CD14-positive monocyte (primary cell): ENCODE measurements at regions of chr17 and their contacts with region 1.

Region 1: GRCh38 chr17:80981062-80981902 is 10.4 kb upstream of the CHMP6 start:
- DNase-seq: peak in 1 of 3 donors; percentile 22
- H3K4me3 ChIP-seq: no peak overlapping the region
- H3K4me3 Mint-ChIP-seq: peak overlapping the region in 1 of 2 donors; percentile 72
- H3K27ac ChIP-seq: no peak overlapping the region
- H3K27ac Mint-ChIP-seq: peak overlapping the region in 1 of 7 donors; percentile 53
- H3K4me1 ChIP-seq: peaks cover 1 to 7% of the 10 kb centered on the region in 2 donors
- H3K4me1 Mint-ChIP-seq: peaks cover 6% of the 10 kb centered on the region
- H3K27me3 ChIP-seq: peaks cover 0 to 3% of the 10 kb centered on the region in 2 donors
- H3K27me3 Mint-ChIP-seq: peaks cover 2 to 15% (median 12%) of the 10 kb centered on the region in 3 donors
- CTCF ChIP-seq: peak; percentile 99

Region 2: GRCh38 chr17:80575057-80575875 is 406.0 kb before region 1 on chr17:
- intact Hi-C with region 1: loop called in 1 of 2 experiments (anchors 5 kb)
- DNase-seq: peak; percentile 82 to 86 (median 83)
- H3K4me3 ChIP-seq: no peak overlapping the region
- H3K4me3 Mint-ChIP-seq: no peak overlapping the region
- H3K27ac ChIP-seq: no peak overlapping the region
- H3K27ac Mint-ChIP-seq: no peak overlapping the region
- H3K4me1 ChIP-seq: no peaks in the 10 kb centered on the region
- H3K4me1 Mint-ChIP-seq: no peaks in the 10 kb centered on the region
- H3K27me3 ChIP-seq: no peaks in the 10 kb centered on the region
- H3K27me3 Mint-ChIP-seq: no peaks in the 10 kb centered on the region
- CTCF ChIP-seq: peak; percentile 100

Region 3: DNA sequence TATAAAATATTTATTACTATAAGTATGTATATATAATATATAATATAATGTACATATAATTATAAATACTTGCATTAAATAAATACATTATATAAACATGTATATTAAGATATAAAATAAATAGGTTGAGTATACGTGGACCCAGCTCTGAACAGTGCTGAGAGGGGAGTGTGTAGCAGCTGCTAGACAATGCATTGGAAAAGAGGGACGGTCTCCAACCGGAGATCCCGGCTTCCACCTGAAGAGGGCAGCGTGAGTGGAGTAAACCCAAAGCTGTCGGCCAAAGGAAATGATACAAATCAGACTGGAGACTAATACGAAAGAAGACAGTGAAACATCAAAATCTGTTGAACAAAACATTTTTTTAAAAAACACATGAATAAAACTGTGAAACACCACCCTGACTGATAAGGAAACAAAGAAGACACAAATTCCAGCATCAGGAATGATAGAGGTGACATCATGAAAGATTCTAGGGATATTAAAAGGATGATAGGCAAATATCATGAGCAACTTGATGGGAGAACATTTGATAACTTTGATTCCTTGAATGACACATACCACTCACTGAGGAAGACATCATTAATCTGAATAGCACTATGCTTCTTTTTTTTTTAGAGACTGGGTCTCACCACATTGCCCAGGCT is 115.0 kb before region 1 on chr17:
- intact Hi-C with region 1: loop called in 1 of 2 experiments (anchors 10 kb)
- DNase-seq: peak; percentile 53 to 73 (median 72)
- H3K4me3 ChIP-seq: no peak overlapping the region
- H3K4me3 Mint-ChIP-seq: no peak overlapping the region
- H3K27ac ChIP-seq: no peak overlapping the region
- H3K27ac Mint-ChIP-seq: peak overlapping the region in 2 of 7 donors; percentile 2 to 89
- H3K4me1 ChIP-seq: peaks cover 26 to 27% of the 10 kb centered on the region in 2 donors
- H3K4me1 Mint-ChIP-seq: peaks cover 32% of the 10 kb centered on the region
- H3K27me3 ChIP-seq: no peaks in the 10 kb centered on the region
- H3K27me3 Mint-ChIP-seq: peaks cover 2 to 13% (median 2%) of the 10 kb centered on the region in 3 donors
- CTCF ChIP-seq: peak; percentile 81

Region 4: DNA sequence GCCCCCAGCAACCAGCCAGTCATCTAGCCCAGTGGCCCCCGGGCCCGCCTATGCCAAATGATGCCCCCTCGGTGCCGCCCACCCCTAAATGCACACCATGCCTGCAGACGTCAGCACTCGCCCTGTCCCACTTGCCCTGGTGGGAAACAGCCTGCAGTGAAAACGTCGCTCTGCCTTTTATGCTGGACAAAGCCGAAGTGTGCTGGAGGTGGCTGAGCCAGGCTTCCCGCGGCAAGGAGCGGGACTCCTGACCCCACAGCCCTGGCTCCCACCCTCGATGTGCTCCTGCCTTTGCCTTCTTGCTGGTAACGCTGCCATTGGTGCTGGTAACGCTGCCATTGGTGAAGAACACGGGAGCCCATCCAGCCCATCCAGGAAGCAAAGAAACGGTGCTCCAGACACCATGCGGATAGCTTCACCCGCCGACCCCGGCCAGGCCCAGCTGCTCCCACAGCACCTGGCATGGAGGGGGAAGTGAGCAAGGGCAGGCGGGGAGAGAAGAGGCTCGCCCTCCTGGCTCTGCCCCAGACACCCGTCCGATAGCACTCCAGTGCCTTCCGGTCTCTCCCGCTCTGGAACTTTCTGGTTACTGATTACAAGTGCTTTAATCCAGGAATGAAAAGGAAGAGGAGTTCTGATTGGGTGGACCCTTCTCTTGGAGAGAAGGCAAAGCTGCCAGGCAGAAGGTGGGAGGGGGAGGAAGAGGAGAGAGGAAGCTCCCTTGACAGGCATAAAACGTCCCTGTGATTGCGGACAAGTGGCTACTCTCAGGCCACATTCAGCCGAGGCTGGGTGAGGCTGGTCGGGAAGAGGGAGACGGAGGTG is 49.7 kb after region 1 on chr17:
- intact Hi-C with region 1: no loop called
- DNase-seq: peak in 1 of 3 donors; percentile 5
- H3K4me3 ChIP-seq: peak overlapping the region in 1 of 3 experiments; percentile 97
- H3K4me3 Mint-ChIP-seq: peak overlapping the region; percentile 97 to 99
- H3K27ac ChIP-seq: peak overlapping the region in 1 of 2 donors; percentile 27
- H3K27ac Mint-ChIP-seq: peak overlapping the region in 3 of 7 donors; percentile 44 to 83 (median 81)
- H3K4me1 ChIP-seq: peaks cover 40 to 43% of the 10 kb centered on the region in 2 donors
- H3K4me1 Mint-ChIP-seq: peaks cover 46% of the 10 kb centered on the region
- H3K27me3 ChIP-seq: peaks cover 0 to 29% of the 10 kb centered on the region in 2 donors
- H3K27me3 Mint-ChIP-seq: peaks cover 15 to 47% (median 37%) of the 10 kb centered on the region in 3 donors
- CTCF ChIP-seq: no peak

Region 5: GRCh38 chr17:81083125-81083765 is 102.0 kb after region 1 on chr17:
- intact Hi-C with region 1: no loop called
- DNase-seq: no peak
- H3K4me3 ChIP-seq: no peak overlapping the region
- H3K4me3 Mint-ChIP-seq: no peak overlapping the region
- H3K27ac ChIP-seq: no peak overlapping the region
- H3K27ac Mint-ChIP-seq: no peak overlapping the region
- H3K4me1 ChIP-seq: no peaks in the 10 kb centered on the region
- H3K4me1 Mint-ChIP-seq: no peaks in the 10 kb centered on the region
- H3K27me3 ChIP-seq: no peaks in the 10 kb centered on the region
- H3K27me3 Mint-ChIP-seq: peaks cover 2 to 4% (median 3%) of the 10 kb centered on the region in 3 donors
- CTCF ChIP-seq: no peak